ENCODE measurements at regions of chrX and their contacts with region 1.

Region 1: GRCh38 chrX:46803140-46803539 is 33.7 kb upstream of the RP2 start:
- DNase-seq: peak; percentile 15
- ATAC-seq: peak; percentile 69
- H3K4me3 ChIP-seq: no peak overlapping the region
- H3K27ac ChIP-seq: no peak overlapping the region
- H3K4me1 ChIP-seq: no peaks in the 10 kb centered on the region
- H3K27me3 ChIP-seq: no peaks in the 10 kb centered on the region
- CTCF ChIP-seq: peak; percentile 50
- EP300 ChIP-seq: no peak
- POLR2A ChIP-seq: no peak
- RAD21 ChIP-seq: no peak

Region 2: GRCh38 chrX:46754586-46755061 is 48.5 kb before region 1 on chrX:
- CTCF ChIA-PET with region 1: no interaction called
- POLR2A ChIA-PET with region 1: no interaction called
- in situ Hi-C with region 1: no loop called
- intact Hi-C with region 1: no loop called
- DNase-seq: no peak
- ATAC-seq: no peak
- H3K4me3 ChIP-seq: no peak overlapping the region
- H3K27ac ChIP-seq: no peak overlapping the region
- H3K4me1 ChIP-seq: peaks cover 17% of the 10 kb centered on the region
- H3K27me3 ChIP-seq: no peaks in the 10 kb centered on the region
- CTCF ChIP-seq: no peak
- EP300 ChIP-seq: no peak
- POLR2A ChIP-seq: no peak
- RAD21 ChIP-seq: no peak

Region 3: DNA sequence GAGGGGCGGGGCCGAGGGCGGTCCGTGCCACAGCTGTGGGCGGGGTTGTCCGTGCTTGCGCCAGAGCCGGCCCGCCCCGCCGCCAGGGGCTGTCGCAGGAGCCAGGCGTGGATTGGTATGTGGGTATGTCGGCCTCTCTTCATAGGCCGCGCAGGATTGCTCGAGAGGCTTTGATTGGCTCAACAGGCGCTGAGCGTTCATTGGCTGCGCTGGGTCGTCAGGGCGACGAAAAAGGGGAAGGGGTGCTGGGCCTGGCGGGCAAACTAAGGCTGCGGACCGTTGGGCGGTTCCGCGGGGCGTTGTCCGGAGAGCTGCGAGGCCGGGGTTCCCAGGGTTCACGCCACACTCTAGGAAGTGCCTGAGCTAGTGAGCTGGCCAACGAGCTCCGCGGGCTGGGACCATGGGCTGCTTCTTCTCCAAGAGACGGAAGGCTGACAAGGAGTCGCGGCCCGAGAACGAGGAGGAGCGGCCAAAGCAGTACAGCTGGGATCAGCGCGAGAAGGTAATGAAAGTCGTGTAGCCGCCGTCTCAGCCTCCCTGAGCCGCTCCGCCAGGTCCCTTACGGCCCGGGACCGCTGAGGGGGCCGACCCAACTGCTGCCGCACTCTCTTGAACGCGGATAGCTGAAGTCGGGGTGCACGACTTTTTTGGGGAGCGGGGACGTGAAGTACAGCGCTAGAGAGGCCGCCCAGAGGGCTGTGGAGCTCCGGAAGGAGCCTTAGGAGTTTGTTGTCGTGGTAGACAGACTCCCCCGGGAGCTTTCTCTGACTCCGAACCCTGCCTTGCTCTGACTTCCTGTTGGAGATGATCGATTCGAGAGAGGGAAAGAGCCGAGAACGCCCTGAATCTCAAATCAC is 33.8 kb after region 1 on chrX and contains the start of gene RP2:
- CTCF ChIA-PET with region 1: no interaction called
- POLR2A ChIA-PET with region 1: no interaction called
- in situ Hi-C with region 1: no loop called
- intact Hi-C with region 1: loop called (anchors 5 kb)
- DNase-seq: peak; percentile 91
- ATAC-seq: peak; percentile 99
- H3K4me3 ChIP-seq: peak within 1 kb of the TSS; percentile 74 to 82 (median 81)
- H3K27ac ChIP-seq: peak within 1 kb of the TSS; percentile 83
- H3K4me1 ChIP-seq: peaks cover 15% of the 10 kb centered on the region
- H3K27me3 ChIP-seq: no peaks in the 10 kb centered on the region; a peak in 1 of 5 replicates
- CTCF ChIP-seq: peak; percentile 3; the same call in 1 of the 2 replicates
- EP300 ChIP-seq: no peak
- POLR2A ChIP-seq: peak; percentile 71 to 86
- RAD21 ChIP-seq: no peak
- total RNA-seq, gene RP2: 9.9 and 14.6 TPM in 2 replicates

Region 4: GRCh38 chrX:47030339-47030738 is 227.2 kb after region 1 on chrX:
- CTCF ChIA-PET with region 1: interaction called, 3 read pairs
- POLR2A ChIA-PET with region 1: no interaction called
- in situ Hi-C with region 1: no loop called
- intact Hi-C with region 1: loop called (anchors 2 kb)
- DNase-seq: peak; percentile 53
- ATAC-seq: no peak
- H3K4me3 ChIP-seq: no peak overlapping the region
- H3K27ac ChIP-seq: no peak overlapping the region
- H3K4me1 ChIP-seq: no peaks in the 10 kb centered on the region
- H3K27me3 ChIP-seq: no peaks in the 10 kb centered on the region
- CTCF ChIP-seq: peak; percentile 54
- EP300 ChIP-seq: no peak
- POLR2A ChIP-seq: no peak
- RAD21 ChIP-seq: peak; percentile 18; the same call in 1 of the 2 replicates